ENCODE measurements at regions of chr17 and their contacts with region 1.

Region 1: GRCh38 chr17:75779231-75779986 is 5.2 kb upstream of the UNK start:
- DNase-seq: peak; percentile 100
- H3K4me3 Mint-ChIP-seq: peak overlapping the region; percentile 93
- H3K27ac Mint-ChIP-seq: peak overlapping the region; percentile 100
- H3K4me1 Mint-ChIP-seq: peaks cover 18% of the 10 kb centered on the region
- H3K27me3 Mint-ChIP-seq: no peaks in the 10 kb centered on the region
- CTCF ChIP-seq: no peak

Region 2: GRCh38 chr17:75673487-75673886 is 105.9 kb before region 1 on chr17:
- CTCF ChIA-PET with region 1: interaction called, 4 read pairs
- POLR2A ChIA-PET with region 1: interaction called, 31 read pairs
- intact Hi-C with region 1: no loop called
- DNase-seq: no peak
- H3K4me3 Mint-ChIP-seq: no peak overlapping the region
- H3K27ac Mint-ChIP-seq: no peak overlapping the region
- H3K4me1 Mint-ChIP-seq: peaks cover 2% of the 10 kb centered on the region
- H3K27me3 Mint-ChIP-seq: no peaks in the 10 kb centered on the region
- CTCF ChIP-seq: no peak

Region 3: GRCh38 chr17:75693500-75694481 is 85.6 kb before region 1 on chr17:
- CTCF ChIA-PET with region 1: interaction called, 3 read pairs
- POLR2A ChIA-PET with region 1: interaction called, 17 read pairs
- intact Hi-C with region 1: no loop called
- DNase-seq: peak; percentile 99
- H3K4me3 Mint-ChIP-seq: peak overlapping the region; percentile 28
- H3K27ac Mint-ChIP-seq: peak overlapping the region; percentile 96
- H3K4me1 Mint-ChIP-seq: peaks cover 73% of the 10 kb centered on the region
- H3K27me3 Mint-ChIP-seq: no peaks in the 10 kb centered on the region
- CTCF ChIP-seq: no peak

Region 4: DNA sequence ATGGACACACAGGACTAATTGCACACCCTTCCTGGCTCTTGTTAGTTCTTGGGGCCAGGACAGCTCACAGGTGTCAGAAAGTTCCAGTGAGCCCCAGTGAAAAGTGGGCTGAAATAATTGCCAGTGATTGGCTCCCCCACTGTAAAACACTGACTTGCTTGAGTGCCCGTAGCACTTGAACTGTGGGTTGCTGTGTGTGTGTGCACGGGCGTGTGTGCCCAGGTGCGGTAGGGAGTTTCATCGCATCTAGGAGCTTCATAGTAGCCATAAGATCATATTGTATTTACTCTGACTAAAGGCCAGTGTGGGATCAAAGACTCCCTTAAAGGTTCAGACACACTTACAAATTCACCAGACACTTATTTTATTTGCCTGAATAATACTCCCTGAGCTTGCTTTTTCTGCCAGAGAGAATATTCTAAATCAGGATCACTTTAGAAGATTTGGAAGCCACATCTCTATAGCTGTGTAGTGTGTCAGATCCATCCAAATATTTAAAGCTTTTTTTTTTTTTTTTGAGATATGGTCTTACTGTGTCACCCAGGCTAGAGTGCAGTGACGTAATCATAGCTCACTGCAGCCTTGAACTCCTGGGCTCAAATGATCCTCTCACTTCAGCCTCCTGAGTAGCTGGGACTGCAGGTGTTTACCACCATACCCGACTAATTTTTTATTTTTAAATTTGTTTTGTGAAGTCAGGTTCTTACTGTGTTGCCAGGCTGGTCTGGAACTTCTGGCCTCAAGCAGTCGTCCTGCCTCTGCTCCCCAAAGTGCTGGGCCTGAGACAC is 16.6 kb after region 1 on chr17:
- CTCF ChIA-PET with region 1: interaction called, 3 read pairs
- POLR2A ChIA-PET with region 1: interaction called, 10 read pairs
- intact Hi-C with region 1: no loop called
- DNase-seq: no peak
- H3K4me3 Mint-ChIP-seq: no peak overlapping the region
- H3K27ac Mint-ChIP-seq: no peak overlapping the region
- H3K4me1 Mint-ChIP-seq: no peaks in the 10 kb centered on the region
- H3K27me3 Mint-ChIP-seq: no peaks in the 10 kb centered on the region
- CTCF ChIP-seq: no peak

Region 5: DNA sequence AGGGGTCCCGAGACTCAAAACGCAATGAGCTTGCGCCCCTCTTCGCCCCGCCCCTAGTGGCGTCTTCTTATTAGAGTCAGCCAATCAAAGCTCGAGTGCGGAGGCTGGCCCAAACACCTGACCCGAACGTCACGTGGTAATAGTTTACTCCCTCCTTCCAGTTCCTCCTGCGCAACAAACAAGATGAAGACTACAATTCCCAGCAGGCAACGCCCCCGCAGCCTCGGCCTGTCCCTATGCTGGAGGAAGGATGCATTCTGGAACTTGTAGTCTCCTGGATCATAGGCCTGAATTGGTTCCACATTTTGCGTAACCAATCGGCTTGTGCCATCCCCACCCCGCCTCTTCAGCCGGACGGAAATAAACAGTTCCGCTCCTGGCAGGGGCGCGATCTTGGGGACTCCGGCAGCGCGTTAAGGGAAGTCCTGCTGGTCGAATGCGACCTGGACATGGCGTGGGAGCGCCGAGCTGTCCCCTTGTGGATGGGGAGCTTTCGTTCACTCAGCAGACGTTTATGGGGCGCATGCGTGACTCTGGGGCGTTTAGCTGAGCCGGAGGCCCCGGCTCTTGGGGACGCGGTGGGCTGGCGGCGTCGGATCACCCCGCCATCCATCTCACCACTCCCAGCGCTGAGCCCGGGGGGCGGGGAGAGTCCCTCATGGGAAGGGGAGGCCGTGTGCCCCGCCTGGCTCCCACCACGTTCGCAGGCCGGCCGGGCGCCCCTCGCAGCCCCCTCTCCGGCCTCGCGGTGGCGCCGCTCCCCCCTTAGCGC is 76.1 kb after region 1 on chr17 and contains the start of gene WBP2:
- CTCF ChIA-PET with region 1: interaction called, 6 read pairs
- POLR2A ChIA-PET with region 1: interaction called, 128 read pairs
- intact Hi-C with region 1: no loop called
- DNase-seq: peak; percentile 100
- H3K4me3 Mint-ChIP-seq: no peak within 1 kb of the TSS
- H3K27ac Mint-ChIP-seq: no peak within 1 kb of the TSS
- H3K4me1 Mint-ChIP-seq: peaks cover 19% of the 10 kb centered on the region
- H3K27me3 Mint-ChIP-seq: no peaks in the 10 kb centered on the region
- CTCF ChIP-seq: peak; percentile 14
- total RNA-seq, gene WBP2: 55.7 and 97.9 TPM in 2 replicates

Region 6: GRCh38 chr17:75965475-75965874 is 186.1 kb after region 1 on chr17:
- CTCF ChIA-PET with region 1: no interaction called
- POLR2A ChIA-PET with region 1: no interaction called
- intact Hi-C with region 1: no loop called
- DNase-seq: no peak
- H3K4me3 Mint-ChIP-seq: no peak overlapping the region
- H3K27ac Mint-ChIP-seq: no peak overlapping the region
- H3K4me1 Mint-ChIP-seq: no peaks in the 10 kb centered on the region
- H3K27me3 Mint-ChIP-seq: no peaks in the 10 kb centered on the region
- CTCF ChIP-seq: no peak

Region 7: GRCh38 chr17:76370261-76370993 is 591.0 kb after region 1 on chr17:
- CTCF ChIA-PET with region 1: no interaction called
- POLR2A ChIA-PET with region 1: no interaction called
- intact Hi-C with region 1: no loop called
- DNase-seq: peak; percentile 84
- H3K4me3 Mint-ChIP-seq: no peak overlapping the region
- H3K27ac Mint-ChIP-seq: no peak overlapping the region
- H3K4me1 Mint-ChIP-seq: peaks cover 15% of the 10 kb centered on the region
- H3K27me3 Mint-ChIP-seq: no peaks in the 10 kb centered on the region
- CTCF ChIP-seq: peak; percentile 79